Right ventricle myocardium superior (tissue), 1 donor: ENCODE measurements at regions of chr12 and their contacts with region 1.

Region 1: DNA sequence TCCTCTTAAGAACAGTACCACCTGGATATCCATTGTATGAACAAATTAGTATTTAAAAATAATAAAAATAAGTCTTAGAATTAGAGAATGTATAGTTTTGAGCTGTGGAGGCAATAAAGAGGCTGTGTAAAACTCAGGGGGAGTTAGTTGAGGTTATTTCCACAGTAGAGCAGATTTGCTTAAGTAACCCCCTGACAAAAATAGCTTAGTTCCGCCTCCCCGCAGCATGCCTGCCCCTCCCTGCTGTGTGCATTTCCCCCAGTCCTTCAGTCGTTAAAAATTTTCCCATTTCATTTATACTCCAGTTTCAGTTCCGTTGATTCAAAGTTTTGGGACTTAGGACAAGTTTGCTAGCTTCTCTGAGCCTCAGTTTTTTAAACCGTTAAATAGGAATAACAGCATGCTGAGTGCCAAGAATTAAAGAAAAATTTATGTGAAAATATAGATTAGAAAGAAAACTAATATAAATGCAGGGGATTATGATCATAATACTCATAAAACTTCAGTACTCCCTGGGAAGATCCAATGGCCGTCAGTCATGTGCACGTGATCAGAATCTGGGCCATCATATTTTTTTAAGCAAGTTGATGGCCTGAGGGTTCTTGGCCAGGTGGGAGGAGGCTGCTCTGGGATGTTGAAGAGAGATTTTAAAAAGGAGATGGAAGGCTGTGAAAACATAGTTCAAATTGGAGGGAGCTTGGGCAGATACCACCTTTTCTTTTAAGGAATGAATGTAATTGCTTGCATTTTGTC is 14.5 kb upstream of the SLC38A2 start:
- DNase-seq: peak; percentile 60
- ATAC-seq: no peak

Region 2: GRCh38 chr12:46205294-46205693 is 181.8 kb before region 1 on chr12:
- intact Hi-C with region 1: no loop called
- DNase-seq: no peak
- ATAC-seq: no peak

Region 3: GRCh38 chr12:46332260-46332659 is 54.8 kb before region 1 on chr12:
- intact Hi-C with region 1: no loop called
- DNase-seq: no peak
- ATAC-seq: no peak

Region 4: GRCh38 chr12:46459861-46460545 is 73.0 kb after region 1 on chr12:
- intact Hi-C with region 1: loop called (anchors 5 kb)
- DNase-seq: no peak
- ATAC-seq: peak; percentile 18